CD8-positive, alpha-beta T cell (primary cell): ENCODE measurements at regions of chr11 and their contacts with region 1.

Region 1: DNA sequence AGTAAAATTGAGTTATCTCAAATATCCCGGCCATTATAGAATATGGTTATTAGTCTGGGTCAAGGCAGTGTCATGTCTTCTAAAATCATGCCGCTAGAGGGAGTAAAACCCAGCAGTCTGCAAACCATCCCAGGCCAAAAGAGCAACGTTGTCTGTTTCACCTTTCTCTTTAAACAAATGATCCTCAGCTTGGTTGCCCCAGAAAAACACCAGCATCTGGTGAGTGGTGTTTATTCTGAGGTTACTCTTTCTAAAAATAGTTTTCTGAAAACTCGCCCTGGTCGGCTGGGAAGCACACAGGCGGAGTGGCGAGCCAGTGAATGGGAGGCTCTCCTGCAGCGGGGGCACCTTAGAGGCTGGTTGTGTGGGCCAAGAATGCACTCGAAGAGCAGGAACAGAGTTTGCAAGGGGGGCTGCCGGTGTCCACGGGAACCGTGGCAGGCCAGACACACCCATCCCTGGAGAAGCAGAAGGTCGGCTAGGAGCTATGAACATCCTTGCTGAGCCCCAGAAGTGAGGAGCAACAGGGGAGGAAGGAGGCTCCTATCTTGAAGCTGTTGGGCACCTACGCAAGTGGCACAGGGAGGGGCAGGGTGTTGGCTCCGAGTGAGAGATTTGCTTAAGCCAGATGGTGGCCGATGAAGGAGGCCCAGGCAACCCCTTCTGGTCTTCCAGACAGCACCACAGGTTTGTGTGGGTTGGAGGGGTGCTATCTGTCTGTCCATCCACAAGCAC is 297.1 kb downstream of the ETS1 start:
- DNase-seq: peak; percentile 48 to 94 (median 71)
- ATAC-seq: peak; percentile 67
- H3K4me3 ChIP-seq: peak overlapping the region; percentile 46 to 51
- H3K4me3 Mint-ChIP-seq: peak overlapping the region; percentile 88
- H3K27ac ChIP-seq: peak overlapping the region; percentile 89 to 90
- H3K27ac Mint-ChIP-seq: peak overlapping the region; percentile 100
- H3K4me1 ChIP-seq: peaks cover 79% of the 10 kb centered on the region
- H3K4me1 Mint-ChIP-seq: peaks cover 92% of the 10 kb centered on the region
- H3K27me3 ChIP-seq: no peaks in the 10 kb centered on the region
- H3K27me3 Mint-ChIP-seq: no peaks in the 10 kb centered on the region
- CTCF ChIP-seq: peak; percentile 92

Region 2: GRCh38 chr11:128172046-128172878 is 118.0 kb before region 1 on chr11:
- CTCF ChIA-PET with region 1: interaction called, 16 read pairs
- POLR2A ChIA-PET with region 1: no interaction called
- intact Hi-C with region 1: loop called in 1 of 2 experiments (anchors 1 kb)
- DNase-seq: peak; percentile 76 to 91 (median 86)
- ATAC-seq: peak; percentile 89
- H3K4me3 ChIP-seq: no peak overlapping the region
- H3K4me3 Mint-ChIP-seq: no peak overlapping the region
- H3K27ac ChIP-seq: no peak overlapping the region
- H3K27ac Mint-ChIP-seq: no peak overlapping the region
- H3K4me1 ChIP-seq: no peaks in the 10 kb centered on the region
- H3K4me1 Mint-ChIP-seq: peaks cover 3% of the 10 kb centered on the region
- H3K27me3 ChIP-seq: no peaks in the 10 kb centered on the region
- H3K27me3 Mint-ChIP-seq: no peaks in the 10 kb centered on the region
- CTCF ChIP-seq: peak; percentile 88

Region 3: GRCh38 chr11:128323381-128323780 is 33.1 kb after region 1 on chr11:
- CTCF ChIA-PET with region 1: interaction called, 49 read pairs
- POLR2A ChIA-PET with region 1: interaction called, 20 read pairs
- intact Hi-C with region 1: loop called (anchors 1 kb)
- DNase-seq: peak in 6 of 9 experiments; percentile 13 to 82 (median 60)
- ATAC-seq: no peak
- H3K4me3 ChIP-seq: no peak overlapping the region
- H3K4me3 Mint-ChIP-seq: peak overlapping the region; percentile 16
- H3K27ac ChIP-seq: peak overlapping the region; percentile 87 to 90
- H3K27ac Mint-ChIP-seq: peak overlapping the region; percentile 94
- H3K4me1 ChIP-seq: peaks cover 93% of the 10 kb centered on the region
- H3K4me1 Mint-ChIP-seq: peaks cover 85% of the 10 kb centered on the region
- H3K27me3 ChIP-seq: no peaks in the 10 kb centered on the region
- H3K27me3 Mint-ChIP-seq: no peaks in the 10 kb centered on the region
- CTCF ChIP-seq: peak; percentile 37

Region 4: DNA sequence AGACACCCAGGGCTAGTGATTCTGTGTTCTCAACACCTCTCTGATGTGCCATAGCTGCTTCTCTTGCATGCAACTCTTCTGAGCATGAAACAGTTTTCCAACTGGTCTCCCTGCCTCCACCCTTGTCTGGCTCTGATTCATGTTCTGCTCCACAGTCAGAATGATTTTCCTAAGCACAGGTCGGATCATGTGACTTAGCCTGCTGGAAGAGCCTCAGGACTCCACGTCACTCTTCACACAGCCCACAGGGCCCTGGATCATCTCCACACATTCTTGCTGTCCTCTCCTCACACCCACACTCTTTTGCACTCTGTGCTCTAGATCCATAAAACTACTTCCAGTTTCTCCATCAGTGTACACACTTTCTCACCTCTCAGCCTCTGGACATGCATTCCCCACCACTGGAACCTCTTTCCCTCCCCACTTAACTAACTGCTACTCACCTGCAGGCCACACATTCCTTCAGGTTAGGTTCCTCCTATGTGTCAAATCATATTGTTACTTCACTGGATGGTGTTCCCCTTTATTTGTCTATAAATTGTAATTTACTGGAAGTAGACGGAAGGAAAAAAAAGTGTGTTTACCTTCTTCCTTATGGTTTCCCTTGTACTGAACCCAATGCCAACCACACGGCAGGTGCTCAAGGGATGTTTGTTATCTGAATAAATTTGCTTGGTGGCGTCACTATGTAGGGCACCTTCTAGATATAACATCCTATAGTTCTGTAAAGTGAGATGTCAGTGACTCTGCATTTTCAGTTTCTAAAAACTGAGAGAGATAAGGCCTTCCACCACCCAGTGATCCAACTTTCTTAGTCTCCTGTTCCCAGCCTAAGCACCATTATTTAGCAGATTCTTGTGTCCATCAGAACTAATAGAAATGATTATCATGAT is 163.4 kb after region 1 on chr11:
- CTCF ChIA-PET with region 1: interaction called, 28 read pairs
- POLR2A ChIA-PET with region 1: interaction called, 8 read pairs
- intact Hi-C with region 1: no loop called
- DNase-seq: peak in 1 of 9 experiments; percentile 19
- ATAC-seq: peak; percentile 63
- H3K4me3 ChIP-seq: no peak overlapping the region
- H3K4me3 Mint-ChIP-seq: no peak overlapping the region
- H3K27ac ChIP-seq: peak overlapping the region in 1 of 2 experiments; percentile 32
- H3K27ac Mint-ChIP-seq: peak overlapping the region; percentile 91
- H3K4me1 ChIP-seq: peaks cover 25% of the 10 kb centered on the region
- H3K4me1 Mint-ChIP-seq: peaks cover 76% of the 10 kb centered on the region
- H3K27me3 ChIP-seq: no peaks in the 10 kb centered on the region
- H3K27me3 Mint-ChIP-seq: no peaks in the 10 kb centered on the region
- CTCF ChIP-seq: no peak

Region 5: GRCh38 chr11:128482512-128483191 is 192.4 kb after region 1 on chr11:
- CTCF ChIA-PET with region 1: interaction called, 13 read pairs
- POLR2A ChIA-PET with region 1: interaction called, 7 read pairs
- intact Hi-C with region 1: no loop called
- DNase-seq: peak in 4 of 9 experiments; percentile 61 to 91 (median 82)
- ATAC-seq: peak; percentile 62
- H3K4me3 ChIP-seq: peak overlapping the region; percentile 26 to 40
- H3K4me3 Mint-ChIP-seq: peak overlapping the region; percentile 71
- H3K27ac ChIP-seq: peak overlapping the region; percentile 63 to 88
- H3K27ac Mint-ChIP-seq: peak overlapping the region; percentile 99
- H3K4me1 ChIP-seq: peaks cover 96% of the 10 kb centered on the region
- H3K4me1 Mint-ChIP-seq: peaks cover 96% of the 10 kb centered on the region
- H3K27me3 ChIP-seq: no peaks in the 10 kb centered on the region
- H3K27me3 Mint-ChIP-seq: no peaks in the 10 kb centered on the region
- CTCF ChIP-seq: no peak

Region 6: GRCh38 chr11:128624269-128625175 is 334.2 kb after region 1 on chr11:
- CTCF ChIA-PET with region 1: interaction called, 236 read pairs
- POLR2A ChIA-PET with region 1: interaction called, 21 read pairs
- intact Hi-C with region 1: no loop called
- DNase-seq: peak; percentile 51 to 88 (median 67)
- ATAC-seq: peak; percentile 72
- H3K4me3 ChIP-seq: peak overlapping the region; percentile 6 to 18
- H3K4me3 Mint-ChIP-seq: peak overlapping the region; percentile 56
- H3K27ac ChIP-seq: peak overlapping the region; percentile 48 to 83
- H3K27ac Mint-ChIP-seq: peak overlapping the region; percentile 98
- H3K4me1 ChIP-seq: peaks cover 91% of the 10 kb centered on the region
- H3K4me1 Mint-ChIP-seq: peaks cover 99% of the 10 kb centered on the region
- H3K27me3 ChIP-seq: no peaks in the 10 kb centered on the region
- H3K27me3 Mint-ChIP-seq: no peaks in the 10 kb centered on the region
- CTCF ChIP-seq: no peak

Region 7: DNA sequence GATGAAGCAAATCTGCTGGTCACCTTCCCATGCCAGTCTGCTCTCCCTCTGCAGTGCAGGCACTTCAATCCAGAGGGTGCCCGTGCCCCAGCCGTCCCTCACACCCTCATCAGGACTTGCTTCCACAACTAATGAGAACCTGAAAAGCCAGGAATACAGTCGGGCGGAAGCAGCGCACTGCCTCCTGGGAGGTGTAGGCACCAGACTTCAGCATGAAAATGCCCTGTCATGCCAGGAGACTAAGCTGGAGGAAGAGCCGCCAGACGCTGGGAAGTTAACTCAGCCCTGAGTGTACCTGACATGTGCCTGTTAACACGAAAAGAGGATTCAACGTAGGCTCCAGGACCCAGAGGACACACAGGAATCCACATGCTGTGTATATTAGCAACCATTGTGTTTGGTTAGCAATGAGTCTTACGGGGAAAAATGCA is 363.5 kb after region 1 on chr11:
- CTCF ChIA-PET with region 1: no interaction called
- POLR2A ChIA-PET with region 1: no interaction called
- intact Hi-C with region 1: no loop called
- DNase-seq: no peak
- ATAC-seq: no peak
- H3K4me3 ChIP-seq: no peak overlapping the region
- H3K4me3 Mint-ChIP-seq: no peak overlapping the region
- H3K27ac ChIP-seq: no peak overlapping the region
- H3K27ac Mint-ChIP-seq: no peak overlapping the region
- H3K4me1 ChIP-seq: no peaks in the 10 kb centered on the region
- H3K4me1 Mint-ChIP-seq: peaks cover 3% of the 10 kb centered on the region
- H3K27me3 ChIP-seq: peaks cover 0 to 2% of the 10 kb centered on the region in 2 experiments
- H3K27me3 Mint-ChIP-seq: peaks cover 4% of the 10 kb centered on the region
- CTCF ChIP-seq: no peak